ENCODE measurements at regions of chr1 and their contacts with region 1.

Region 1: DNA sequence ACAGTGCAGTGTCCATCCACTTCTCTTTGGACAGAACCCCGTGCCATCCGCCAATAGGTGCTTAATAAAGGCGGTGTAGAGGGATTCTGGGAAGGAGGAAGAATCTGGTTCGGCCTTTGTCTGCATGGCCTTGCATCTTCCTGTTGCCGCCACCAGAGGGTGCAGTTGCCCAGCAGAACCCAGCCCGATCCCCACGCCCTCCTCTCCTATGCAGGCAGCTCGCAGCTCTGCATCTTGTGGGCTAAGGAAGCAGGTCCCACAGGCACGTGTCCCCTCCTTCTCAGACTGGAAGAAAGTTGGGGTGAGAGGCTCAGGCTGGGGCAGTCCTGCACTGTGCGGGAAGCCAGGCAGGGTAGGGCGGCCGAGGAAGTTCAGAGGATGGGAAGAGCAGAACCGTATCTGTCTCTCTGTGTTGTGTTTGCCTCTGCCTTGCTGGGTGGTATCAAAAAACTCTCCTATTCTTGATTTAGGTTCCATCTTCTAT is 20.8 kb downstream of the NAV1 start:
- DNase-seq: peak; percentile 49 to 80
- ATAC-seq: peak; percentile 80 to 98 (median 93)
- H3K4me3 ChIP-seq: no peak overlapping the region
- H3K4me3 Mint-ChIP-seq: no peak overlapping the region
- H3K27ac ChIP-seq: no peak overlapping the region
- H3K27ac Mint-ChIP-seq: no peak overlapping the region
- H3K4me1 ChIP-seq: peaks cover 5% of the 10 kb centered on the region
- H3K4me1 Mint-ChIP-seq: peaks cover 4 to 7% of the 10 kb centered on the region in 2 donors
- H3K27me3 ChIP-seq: no peaks in the 10 kb centered on the region
- H3K27me3 Mint-ChIP-seq: peaks cover 0 to 5% of the 10 kb centered on the region in 2 donors
- CTCF ChIP-seq: peak; percentile 80

Region 2: GRCh38 chr1:201703621-201704439 is 144.1 kb after region 1 on chr1:
- intact Hi-C with region 1: loop called (anchors 5 kb)
- DNase-seq: peak; percentile 37 to 72
- ATAC-seq: peak; percentile 46 to 78 (median 63)
- H3K4me3 ChIP-seq: no peak overlapping the region
- H3K4me3 Mint-ChIP-seq: no peak overlapping the region
- H3K27ac ChIP-seq: no peak overlapping the region
- H3K27ac Mint-ChIP-seq: no peak overlapping the region
- H3K4me1 ChIP-seq: no peaks in the 10 kb centered on the region
- H3K4me1 Mint-ChIP-seq: no peaks in the 10 kb centered on the region
- H3K27me3 ChIP-seq: no peaks in the 10 kb centered on the region
- H3K27me3 Mint-ChIP-seq: peaks cover 0 to 5% of the 10 kb centered on the region in 2 donors
- CTCF ChIP-seq: peak; percentile 75

Measured in natural killer cell (primary cell).